Ovary (tissue), 10 donors: ENCODE measurements at regions of chr13 and their contacts with region 1.

Region 1: DNA sequence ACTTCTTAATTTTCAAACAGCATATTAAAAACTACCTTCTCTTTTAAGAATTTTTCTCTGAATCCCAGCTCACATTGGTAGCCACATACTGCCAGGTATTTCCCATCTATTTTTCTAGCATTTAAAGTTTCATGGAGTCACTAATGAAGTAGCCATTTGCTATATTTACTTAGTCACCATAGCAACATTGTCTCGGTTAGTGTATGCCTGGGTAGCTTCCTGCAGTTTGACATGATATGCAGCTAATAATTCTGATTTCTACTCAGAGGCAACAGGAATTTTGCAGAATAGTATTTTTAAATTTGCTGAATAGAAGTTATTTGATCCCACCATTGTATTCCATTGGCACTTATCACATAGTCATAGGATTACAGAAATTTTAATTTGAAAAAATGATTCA is 30.9 kb upstream of the KCTD4 start:
- DNase-seq: no peak
- H3K4me3 ChIP-seq: no peak overlapping the region
- H3K27ac ChIP-seq: no peak overlapping the region
- H3K4me1 ChIP-seq: peaks cover 2% of the 10 kb centered on the region
- H3K27me3 ChIP-seq: no peaks in the 10 kb centered on the region
- CTCF ChIP-seq: no peak
- EP300 ChIP-seq: no peak
- POLR2A ChIP-seq: no peak

Region 2: DNA sequence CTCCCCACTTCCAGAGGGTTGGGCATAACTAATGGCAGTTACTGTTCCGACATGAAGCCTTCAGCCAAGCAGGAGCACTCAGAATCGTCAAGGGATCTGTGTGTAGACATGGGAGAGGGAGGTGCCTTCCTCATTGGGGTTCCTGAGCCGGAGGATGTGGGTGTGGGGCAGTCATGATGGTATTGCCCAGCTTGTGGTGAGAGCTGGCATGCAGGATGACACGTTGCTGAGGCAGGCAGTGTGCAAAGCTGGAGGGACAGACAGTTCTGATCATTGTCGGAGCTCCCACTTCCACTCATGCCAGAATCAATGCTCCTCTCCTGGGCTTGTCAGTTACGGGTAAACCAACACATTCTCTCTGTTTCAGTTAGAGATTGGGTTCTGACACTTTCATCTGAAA is 571.7 kb before region 1 on chr13:
- intact Hi-C with region 1: no loop called
- DNase-seq: no peak
- H3K4me3 ChIP-seq: no peak overlapping the region
- H3K27ac ChIP-seq: no peak overlapping the region
- H3K4me1 ChIP-seq: no peaks in the 10 kb centered on the region
- H3K27me3 ChIP-seq: no peaks in the 10 kb centered on the region
- CTCF ChIP-seq: no peak
- EP300 ChIP-seq: no peak
- POLR2A ChIP-seq: no peak

Region 3: DNA sequence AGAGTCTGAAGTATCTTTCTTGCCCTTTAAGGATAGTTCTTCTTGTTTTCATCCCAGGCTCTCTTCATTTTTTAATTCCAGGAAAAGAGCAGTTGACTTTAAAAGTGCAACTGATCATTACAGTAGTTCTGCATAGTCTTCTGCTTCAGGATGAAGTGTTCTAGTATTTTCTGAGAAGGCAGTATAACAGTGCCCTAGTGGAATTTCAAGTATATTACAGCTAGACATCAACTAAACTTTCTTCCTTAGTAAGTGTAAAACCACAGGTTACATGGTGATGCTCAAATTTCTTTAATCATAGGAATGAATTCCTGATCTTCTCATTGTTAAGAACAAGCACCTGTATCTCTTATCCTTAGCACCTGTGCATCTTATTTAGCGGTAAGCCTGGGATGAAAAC is 253.4 kb before region 1 on chr13:
- intact Hi-C with region 1: no loop called
- DNase-seq: no peak
- H3K4me3 ChIP-seq: no peak overlapping the region
- H3K27ac ChIP-seq: no peak overlapping the region
- H3K4me1 ChIP-seq: no peaks in the 10 kb centered on the region
- H3K27me3 ChIP-seq: no peaks in the 10 kb centered on the region
- CTCF ChIP-seq: no peak
- EP300 ChIP-seq: no peak
- POLR2A ChIP-seq: no peak

Region 4: DNA sequence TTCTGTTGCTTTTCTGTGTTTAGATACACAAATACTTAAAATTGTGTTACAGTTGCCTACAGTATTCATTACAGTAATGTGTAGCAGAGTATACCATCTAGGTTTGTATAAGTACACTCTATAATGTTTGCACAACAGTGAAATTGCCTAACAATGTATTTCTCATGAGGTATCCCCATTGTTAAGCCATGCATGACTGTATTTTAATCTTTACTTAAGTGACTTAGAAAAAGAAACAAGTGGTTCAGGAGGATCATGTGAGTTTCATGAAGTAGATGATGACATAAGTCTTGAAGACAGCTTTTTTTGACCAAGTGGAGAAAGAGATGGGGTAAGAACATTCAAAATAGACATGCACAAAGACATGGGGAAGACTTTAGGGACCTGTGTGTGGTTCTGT is 22.5 kb before region 1 on chr13:
- intact Hi-C with region 1: loop called in 1 of 4 experiments (anchors 1 kb)
- DNase-seq: no peak
- H3K4me3 ChIP-seq: no peak overlapping the region
- H3K27ac ChIP-seq: no peak overlapping the region
- H3K4me1 ChIP-seq: peaks cover 3% of the 10 kb centered on the region
- H3K27me3 ChIP-seq: no peaks in the 10 kb centered on the region
- CTCF ChIP-seq: no peak
- EP300 ChIP-seq: no peak
- POLR2A ChIP-seq: no peak